CD14-positive monocyte (primary cell): ENCODE measurements at regions of chr16 and their contacts with region 1.

Region 1: DNA sequence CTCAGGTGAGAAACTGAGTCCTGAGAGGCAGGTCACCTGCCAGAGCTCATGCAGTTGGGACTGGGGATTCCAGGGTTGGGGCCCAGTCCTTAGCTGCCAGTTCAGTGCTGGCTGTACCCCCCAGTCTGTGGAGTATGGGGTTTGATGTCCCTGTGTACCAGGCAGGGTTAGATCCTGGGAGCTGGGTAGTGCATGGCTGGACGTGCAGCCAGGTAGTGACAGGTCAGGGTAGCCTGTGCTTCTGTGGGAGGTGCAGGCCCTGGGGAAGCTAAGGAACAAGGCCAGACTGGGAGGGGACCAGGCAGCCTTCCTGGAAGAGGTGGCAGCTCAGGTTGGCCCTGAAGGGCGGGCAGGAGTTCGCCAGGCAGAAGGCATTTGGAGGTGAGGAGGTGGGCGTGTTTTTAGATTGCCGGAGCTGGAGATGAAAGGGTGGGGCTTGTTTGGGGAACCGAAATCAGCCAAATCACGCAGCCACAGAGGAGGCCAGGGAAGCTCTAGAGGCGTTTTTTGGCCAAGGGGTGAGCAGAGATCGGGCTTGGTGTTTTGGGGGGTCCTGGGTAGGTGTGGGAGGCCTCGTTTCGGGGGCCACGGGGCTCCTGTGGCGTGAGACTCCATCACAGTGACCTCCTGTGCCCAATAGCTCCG is 7.5 kb downstream of the ADCY7 start:
- DNase-seq: peak; percentile 78 to 80 (median 79)
- H3K4me3 ChIP-seq: peak overlapping the region; percentile 67 to 86 (median 68)
- H3K4me3 Mint-ChIP-seq: peak overlapping the region; percentile 99 to 100
- H3K27ac ChIP-seq: peak overlapping the region; percentile 93 to 97
- H3K27ac Mint-ChIP-seq: peak overlapping the region; percentile 98 to 100 (median 100)
- H3K4me1 ChIP-seq: peaks cover 95 to 96% of the 10 kb centered on the region in 2 donors
- H3K4me1 Mint-ChIP-seq: peaks cover 90% of the 10 kb centered on the region
- H3K27me3 ChIP-seq: no peaks in the 10 kb centered on the region
- H3K27me3 Mint-ChIP-seq: no peaks in the 10 kb centered on the region
- CTCF ChIP-seq: no peak

Region 2: GRCh38 chr16:50093607-50094539 is 179.9 kb before region 1 on chr16:
- intact Hi-C with region 1: loop called in 1 of 2 experiments (anchors 10 kb)
- DNase-seq: peak; percentile 97 to 98 (median 98)
- H3K4me3 ChIP-seq: peak overlapping the region in 1 of 3 experiments; percentile 16
- H3K4me3 Mint-ChIP-seq: peak overlapping the region in 1 of 2 donors; percentile 65
- H3K27ac ChIP-seq: peak overlapping the region; percentile 94 to 97
- H3K27ac Mint-ChIP-seq: peak overlapping the region; percentile 90 to 98 (median 97)
- H3K4me1 ChIP-seq: peaks cover 19% of the 10 kb centered on the region in 2 donors
- H3K4me1 Mint-ChIP-seq: peaks cover 19% of the 10 kb centered on the region
- H3K27me3 ChIP-seq: no peaks in the 10 kb centered on the region
- H3K27me3 Mint-ChIP-seq: peaks cover 0 to 2% (median 0%) of the 10 kb centered on the region in 3 donors
- CTCF ChIP-seq: no peak

Region 3: DNA sequence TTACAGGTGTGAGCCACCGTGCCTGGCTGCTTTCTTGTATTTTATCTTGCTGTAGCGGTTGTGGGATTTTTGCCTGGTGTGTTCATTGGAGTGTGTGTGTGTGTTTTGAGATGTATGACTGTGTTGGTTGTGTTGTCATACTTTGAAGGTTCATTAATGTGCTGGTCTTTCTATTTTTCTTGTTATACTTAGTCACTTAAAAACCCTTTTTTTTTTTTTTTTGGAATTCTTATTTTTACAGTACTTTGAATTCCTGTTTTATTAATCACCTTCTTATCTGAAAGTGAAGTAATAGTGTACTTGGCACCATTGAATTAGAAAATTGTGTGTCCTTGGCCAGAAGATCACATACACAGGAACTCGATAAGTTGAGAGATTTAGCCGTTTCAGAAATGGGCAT is 90.5 kb before region 1 on chr16:
- intact Hi-C with region 1: no loop called
- DNase-seq: no peak
- H3K4me3 ChIP-seq: no peak overlapping the region
- H3K4me3 Mint-ChIP-seq: no peak overlapping the region
- H3K27ac ChIP-seq: no peak overlapping the region
- H3K27ac Mint-ChIP-seq: peak overlapping the region in 1 of 7 donors; percentile 42
- H3K4me1 ChIP-seq: no peaks in the 10 kb centered on the region
- H3K4me1 Mint-ChIP-seq: peaks cover 12% of the 10 kb centered on the region
- H3K27me3 ChIP-seq: no peaks in the 10 kb centered on the region
- H3K27me3 Mint-ChIP-seq: no peaks in the 10 kb centered on the region
- CTCF ChIP-seq: no peak

Region 4: DNA sequence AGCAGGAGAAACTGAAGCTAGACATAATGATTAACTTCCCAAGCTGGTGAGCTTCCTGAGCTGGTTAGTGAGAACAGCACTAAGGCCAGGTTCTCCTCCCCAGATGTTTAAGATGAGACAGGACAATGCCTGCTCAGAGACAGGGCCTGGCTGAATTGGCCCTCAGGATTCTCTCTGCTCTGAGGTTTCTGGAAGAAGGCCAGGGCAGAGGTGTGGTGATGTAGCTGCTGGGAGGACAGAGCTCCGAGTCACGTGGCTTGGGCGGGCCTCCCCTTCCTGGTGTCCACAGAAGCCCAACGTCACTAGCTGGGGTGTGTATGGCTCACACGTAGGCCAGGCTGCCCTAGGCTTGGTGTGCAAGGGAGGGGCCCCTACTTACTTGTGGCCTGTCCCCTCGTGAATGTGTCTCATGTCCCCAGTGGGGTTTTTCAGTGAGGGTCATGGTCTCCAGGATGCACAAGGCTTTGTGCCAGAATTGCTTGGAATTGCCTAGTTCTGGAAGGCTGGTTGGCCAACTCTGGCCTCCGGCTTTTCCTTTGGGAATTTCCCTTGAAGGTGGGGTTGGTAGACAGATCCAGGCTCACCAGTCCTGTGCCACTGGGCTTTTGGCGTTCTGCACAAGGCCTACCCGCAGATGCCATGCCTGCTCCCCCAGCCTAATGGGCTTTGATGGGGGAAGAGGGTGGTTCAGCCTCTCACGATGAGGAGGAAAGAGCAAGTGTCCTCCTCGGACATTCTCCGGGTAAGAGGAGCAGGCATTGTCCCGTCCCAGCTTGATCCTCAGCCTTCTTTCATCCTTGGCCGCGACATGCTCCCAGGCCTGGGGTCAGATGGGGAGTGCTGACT is 423.0 kb after region 1 on chr16:
- intact Hi-C with region 1: loop called in 1 of 2 experiments (anchors 10 kb)
- DNase-seq: peak; percentile 98 to 100 (median 99)
- H3K4me3 ChIP-seq: peak overlapping the region in 2 of 3 experiments; percentile 32 to 95
- H3K4me3 Mint-ChIP-seq: peak overlapping the region; percentile 95 to 99
- H3K27ac ChIP-seq: peak overlapping the region; percentile 97 to 100
- H3K27ac Mint-ChIP-seq: peak overlapping the region; percentile 98 to 100 (median 99)
- H3K4me1 ChIP-seq: peaks cover 75 to 89% of the 10 kb centered on the region in 2 donors
- H3K4me1 Mint-ChIP-seq: peaks cover 87% of the 10 kb centered on the region
- H3K27me3 ChIP-seq: no peaks in the 10 kb centered on the region
- H3K27me3 Mint-ChIP-seq: no peaks in the 10 kb centered on the region
- CTCF ChIP-seq: no peak